AG04450 (cell line): ENCODE measurements at regions of chr6 and their contacts with region 1.

Region 1: GRCh38 chr6:145734486-145735355 is 599 bp downstream of the EPM2A start:
- DNase-seq: peak; percentile 59
- H3K4me3 ChIP-seq: peak overlapping the region; percentile 73
- H3K27ac ChIP-seq: peak overlapping the region; percentile 92
- H3K27me3 ChIP-seq: no peaks in the 10 kb centered on the region
- CTCF ChIP-seq: no peak

Region 2: DNA sequence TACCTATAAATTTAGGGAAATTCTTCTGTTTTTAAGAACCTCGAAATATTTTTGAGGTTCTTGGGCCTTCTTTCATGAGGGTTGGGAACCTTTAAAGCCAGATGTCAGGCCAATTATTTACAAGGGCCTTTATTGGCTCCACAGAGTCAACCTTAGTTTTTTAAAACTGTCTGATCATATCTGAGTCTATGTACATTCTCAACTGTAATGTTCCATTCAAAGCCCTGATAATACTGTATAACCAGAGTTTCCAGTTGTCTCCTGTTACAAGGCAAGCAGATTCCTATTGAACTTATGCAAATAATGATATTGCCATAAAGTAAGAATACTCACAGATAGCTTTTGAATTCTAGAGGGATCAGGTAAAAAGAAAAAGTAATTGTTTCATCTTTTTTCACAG is 544.9 kb before region 1 on chr6:
- CTCF ChIA-PET with region 1: no interaction called
- POLR2A ChIA-PET with region 1: no interaction called
- DNase-seq: no peak
- H3K4me3 ChIP-seq: no peak overlapping the region
- H3K27ac ChIP-seq: no peak overlapping the region
- H3K27me3 ChIP-seq: no peaks in the 10 kb centered on the region
- CTCF ChIP-seq: no peak

Region 3: GRCh38 chr6:145814501-145815308 is 80.0 kb after region 1 on chr6 and contains the start of gene FBXO30:
- CTCF ChIA-PET with region 1: interaction called, 5 read pairs
- POLR2A ChIA-PET with region 1: interaction called, 25 read pairs
- DNase-seq: peak; percentile 61
- H3K4me3 ChIP-seq: peak within 1 kb of the TSS; percentile 79
- H3K27ac ChIP-seq: peak within 1 kb of the TSS; percentile 82
- H3K27me3 ChIP-seq: no peaks in the 10 kb centered on the region
- CTCF ChIP-seq: peak; percentile 27
- polyA plus RNA-seq, gene FBXO30: 8.8 and 11.8 TPM in 2 replicates